Gastrocnemius medialis (tissue), 4 donors: ENCODE measurements at regions of chr9 and their contacts with region 1.

Region 1: DNA sequence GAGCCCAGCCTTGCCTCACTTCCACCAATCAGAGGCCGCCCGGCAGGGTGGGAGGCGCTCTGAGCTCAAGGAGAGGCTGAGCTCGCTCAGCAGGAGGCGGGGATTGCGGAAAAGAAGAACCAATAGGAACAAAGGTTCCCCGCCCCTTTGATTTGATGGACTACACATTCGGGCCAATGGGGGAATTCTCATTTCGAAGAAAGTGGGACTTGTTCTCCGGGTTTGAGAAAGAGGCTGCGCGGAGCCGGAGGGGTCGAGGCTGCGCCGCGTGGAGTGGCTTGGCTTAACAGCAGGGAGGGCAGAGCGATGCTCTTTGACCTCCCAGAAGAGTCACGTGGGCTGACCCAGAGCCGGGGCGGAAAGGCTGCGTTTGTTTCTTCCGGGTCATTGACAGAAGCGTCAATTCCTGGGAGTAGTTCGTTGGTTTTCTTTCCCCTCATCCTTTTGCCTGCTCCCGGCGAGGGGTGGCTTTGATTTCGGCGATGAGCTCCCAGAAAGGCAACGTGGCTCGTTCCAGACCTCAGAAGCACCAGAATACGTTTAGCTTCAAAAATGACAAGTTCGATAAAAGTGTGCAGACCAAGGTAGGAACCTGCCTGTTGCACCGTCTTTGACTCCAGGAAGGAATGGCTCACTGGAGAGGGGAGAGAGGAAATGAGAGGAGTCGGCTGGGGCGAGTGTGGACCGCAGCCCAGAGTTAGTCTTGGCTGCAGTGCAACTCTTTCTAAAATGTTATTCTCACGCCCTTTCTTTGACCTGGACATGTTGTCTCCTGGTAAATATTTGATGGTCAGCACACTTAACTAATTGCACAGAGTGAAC is at the start of gene C9orf85:
- DNase-seq: peak; percentile 99
- ATAC-seq: peak; percentile 91 to 96
- H3K4me3 ChIP-seq: peak within 1 kb of the TSS; percentile 73 to 96 (median 87)
- H3K27ac ChIP-seq: peak within 1 kb of the TSS; percentile 88 to 96 (median 92)
- H3K4me1 ChIP-seq: peaks cover 43 to 58% of the 10 kb centered on the region in 2 donors
- H3K27me3 ChIP-seq: no peaks in the 10 kb centered on the region
- CTCF ChIP-seq: no peak
- POLR2A ChIP-seq: peak in 1 of 2 donors; percentile 69
- total RNA-seq, gene C9orf85: 1.7 to 9.6 (median 6.3) TPM

Region 2: GRCh38 chr9:71944475-71945375 is 33.3 kb after region 1 on chr9:
- in situ Hi-C with region 1: no loop called
- intact Hi-C with region 1: loop called (anchors 2 kb)
- DNase-seq: no peak
- ATAC-seq: peak; percentile 53 to 81
- H3K4me3 ChIP-seq: no peak overlapping the region
- H3K27ac ChIP-seq: peak overlapping the region in 2 of 4 donors; percentile 45 to 52
- H3K4me1 ChIP-seq: peaks cover 11 to 39% of the 10 kb centered on the region in 2 donors
- H3K27me3 ChIP-seq: no peaks in the 10 kb centered on the region
- CTCF ChIP-seq: no peak
- POLR2A ChIP-seq: no peak

Region 3: GRCh38 chr9:71966601-71967000 is 55.1 kb after region 1 on chr9:
- in situ Hi-C with region 1: no loop called
- intact Hi-C with region 1: no loop called
- DNase-seq: no peak
- ATAC-seq: no peak
- H3K4me3 ChIP-seq: no peak overlapping the region
- H3K27ac ChIP-seq: no peak overlapping the region
- H3K4me1 ChIP-seq: no peaks in the 10 kb centered on the region
- H3K27me3 ChIP-seq: no peaks in the 10 kb centered on the region
- CTCF ChIP-seq: no peak
- POLR2A ChIP-seq: no peak

Region 4: GRCh38 chr9:71984403-71984802 is 72.9 kb after region 1 on chr9:
- in situ Hi-C with region 1: no loop called
- intact Hi-C with region 1: loop called (anchors 1 kb)
- DNase-seq: peak; percentile 89 to 91
- ATAC-seq: peak; percentile 94 to 100
- H3K4me3 ChIP-seq: no peak overlapping the region
- H3K27ac ChIP-seq: peak overlapping the region in 3 of 4 donors; percentile 16 to 42 (median 37)
- H3K4me1 ChIP-seq: peaks cover 23 to 27% of the 10 kb centered on the region in 2 donors
- H3K27me3 ChIP-seq: no peaks in the 10 kb centered on the region
- CTCF ChIP-seq: no peak
- POLR2A ChIP-seq: no peak

Region 5: DNA sequence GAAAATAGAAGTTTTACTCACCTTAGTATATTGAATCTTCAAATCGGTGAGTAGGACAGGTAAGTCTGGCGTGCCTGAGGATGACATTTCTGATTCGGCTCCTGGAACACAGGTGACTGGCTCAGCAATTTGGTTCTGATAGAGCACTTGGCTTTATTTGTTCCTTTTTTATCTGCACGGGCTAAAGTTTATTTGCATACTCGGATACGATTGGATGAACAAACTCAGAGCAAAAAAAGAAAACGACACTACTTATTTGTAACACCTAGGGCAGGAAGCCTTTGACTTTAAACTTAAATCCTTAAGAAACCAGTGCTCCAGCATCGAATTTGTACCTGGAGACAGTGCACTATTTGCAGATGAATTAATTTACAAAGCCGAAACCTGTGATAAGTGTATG is 1041.5 kb after region 1 on chr9 and contains the start of gene ALDH1A1:
- in situ Hi-C with region 1: no loop called
- intact Hi-C with region 1: loop called (anchors 5 kb)
- DNase-seq: no peak
- ATAC-seq: peak; percentile 49 to 59
- H3K4me3 ChIP-seq: peak within 1 kb of the TSS; percentile 39 to 46 (median 41)
- H3K27ac ChIP-seq: peak within 1 kb of the TSS; percentile 54 to 78 (median 68)
- H3K4me1 ChIP-seq: peaks cover 0 to 21% of the 10 kb centered on the region in 2 donors
- H3K27me3 ChIP-seq: no peaks in the 10 kb centered on the region
- CTCF ChIP-seq: no peak
- POLR2A ChIP-seq: peak; percentile 11 to 67
- total RNA-seq, gene ALDH1A1: 23.3 to 42.8 (median 30.9) TPM